A673 (cell line): ENCODE measurements at regions of chr14 and their contacts with region 1.

Region 1: GRCh38 chr14:71668186-71668912 is 263.9 kb upstream of the RGS6 start:
- DNase-seq: no peak
- H3K4me3 ChIP-seq: no peak overlapping the region
- H3K27ac ChIP-seq: no peak overlapping the region
- H3K4me1 ChIP-seq: peaks cover 32% of the 10 kb centered on the region
- H3K27me3 ChIP-seq: no peaks in the 10 kb centered on the region
- CTCF ChIP-seq: no peak

Region 2: DNA sequence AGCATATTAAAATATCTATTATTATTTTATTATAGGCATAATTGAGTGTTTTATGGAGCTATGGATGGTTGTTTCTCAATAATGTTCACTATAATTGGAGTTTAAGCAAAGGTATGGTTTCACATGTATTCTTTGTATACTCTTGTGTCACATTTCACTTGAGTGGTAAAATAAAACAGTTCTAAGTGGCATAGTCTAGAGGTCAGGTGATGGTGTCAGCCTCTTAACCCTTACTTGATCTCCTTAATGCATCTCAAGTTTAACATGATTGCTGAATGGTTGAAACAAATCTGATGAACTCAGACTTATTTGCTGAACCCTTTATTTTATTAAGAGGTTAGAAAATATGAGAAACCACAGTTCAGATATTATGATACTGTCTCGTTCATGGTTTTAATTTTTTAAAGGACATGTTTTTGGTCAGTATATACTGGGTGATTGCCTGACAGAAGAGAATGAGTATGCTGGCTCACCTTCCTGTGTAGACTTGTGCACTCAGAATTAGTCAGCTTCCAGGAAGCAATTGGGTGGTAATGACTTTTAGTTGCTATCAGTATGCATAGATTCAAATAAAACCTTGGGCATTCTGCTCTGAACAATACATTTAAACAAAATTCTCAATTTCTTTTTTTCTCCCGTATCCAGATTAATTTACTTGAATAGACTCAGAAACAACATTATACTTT is 296.5 kb before region 1 on chr14:
- CTCF ChIA-PET with region 1: no interaction called
- POLR2A ChIA-PET with region 1: interaction called, 22 read pairs
- intact Hi-C with region 1: no loop called
- DNase-seq: peak; percentile 56
- H3K4me3 ChIP-seq: peak overlapping the region; percentile 4
- H3K27ac ChIP-seq: peak overlapping the region; percentile 59
- H3K4me1 ChIP-seq: peaks cover 11% of the 10 kb centered on the region
- H3K27me3 ChIP-seq: no peaks in the 10 kb centered on the region
- CTCF ChIP-seq: no peak